ENCODE measurements at regions of chr1 and their contacts with region 1.

Region 1: GRCh38 chr1:218665221-218665620 is 320.1 kb downstream of the TGFB2 start:
- DNase-seq: peak; percentile 48
- ATAC-seq: peak; percentile 54
- H3K4me3 ChIP-seq: peak overlapping the region; percentile 28; the same call in 1 of the 2 replicates
- H3K27ac ChIP-seq: peak overlapping the region; percentile 51
- H3K4me1 ChIP-seq: peaks cover 32% of the 10 kb centered on the region
- H3K27me3 ChIP-seq: no peaks in the 10 kb centered on the region
- CTCF ChIP-seq: no peak

Region 2: DNA sequence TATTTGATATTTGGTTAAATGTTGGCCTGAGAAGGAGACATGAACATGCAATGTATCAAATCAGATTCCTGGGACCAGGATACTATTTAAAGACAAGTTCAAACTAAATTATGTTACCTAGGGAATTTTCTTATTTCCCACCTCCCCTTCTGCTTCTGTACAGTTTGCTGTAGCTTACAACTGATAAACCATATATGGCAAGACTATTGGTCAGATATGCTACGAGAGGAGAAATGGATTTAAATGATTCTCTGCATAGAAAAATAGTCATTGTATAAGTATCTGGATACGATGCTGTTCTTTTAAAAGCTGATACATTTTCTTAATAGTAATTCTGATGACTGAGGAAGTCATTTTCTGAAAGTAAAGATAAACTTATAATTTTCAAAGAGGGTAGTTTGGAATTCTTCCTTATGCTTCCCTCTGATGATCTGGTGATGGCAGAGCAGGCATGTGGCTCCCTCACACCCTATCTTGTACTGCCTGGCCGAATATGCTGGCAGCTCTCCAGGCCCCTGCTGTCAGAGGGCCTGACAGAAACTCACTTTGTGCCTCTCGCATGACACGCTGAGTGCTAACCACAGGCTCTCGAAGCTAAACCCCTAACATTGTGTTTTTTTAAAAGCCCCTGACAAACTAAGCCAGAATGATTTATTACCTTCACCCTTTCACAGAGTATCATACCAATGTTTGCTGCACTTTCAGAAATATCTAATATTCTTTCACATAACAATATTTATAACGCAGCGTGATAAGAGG is 360.8 kb before region 1 on chr1:
- CTCF ChIA-PET with region 1: no interaction called
- POLR2A ChIA-PET with region 1: no interaction called
- intact Hi-C with region 1: no loop called
- DNase-seq: no peak
- ATAC-seq: no peak
- H3K4me3 ChIP-seq: no peak overlapping the region
- H3K27ac ChIP-seq: no peak overlapping the region
- H3K4me1 ChIP-seq: 0 out of 2 replicates have a peak, but pooled peaks cover 4% of the 10 kb centered on the region
- H3K27me3 ChIP-seq: no peaks in the 10 kb centered on the region
- CTCF ChIP-seq: no peak

Region 3: DNA sequence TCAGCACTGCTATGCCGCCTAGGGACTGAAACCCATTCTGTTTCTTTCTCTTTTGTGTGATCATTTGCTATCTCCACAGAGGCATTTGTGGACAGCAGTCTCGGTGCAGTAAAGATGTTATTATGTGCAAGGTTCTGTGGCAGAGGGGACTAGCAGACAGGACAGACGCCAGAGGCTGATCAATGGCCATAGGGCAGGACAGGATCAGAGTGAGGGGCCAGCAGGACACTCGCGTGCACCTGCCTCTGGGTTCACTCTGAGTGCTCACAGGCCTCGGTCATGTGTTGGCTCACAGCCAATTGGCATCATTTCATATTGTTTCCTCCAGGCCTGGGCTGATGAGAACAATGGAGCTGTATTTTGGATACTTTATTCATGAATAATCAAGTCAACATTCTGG is 107.5 kb before region 1 on chr1:
- CTCF ChIA-PET with region 1: no interaction called
- POLR2A ChIA-PET with region 1: no interaction called
- intact Hi-C with region 1: loop called (anchors 2 kb)
- DNase-seq: peak; percentile 93
- ATAC-seq: peak; percentile 83
- H3K4me3 ChIP-seq: no peak overlapping the region
- H3K27ac ChIP-seq: no peak overlapping the region
- H3K4me1 ChIP-seq: peaks cover 11% of the 10 kb centered on the region
- H3K27me3 ChIP-seq: no peaks in the 10 kb centered on the region
- CTCF ChIP-seq: no peak

Region 4: DNA sequence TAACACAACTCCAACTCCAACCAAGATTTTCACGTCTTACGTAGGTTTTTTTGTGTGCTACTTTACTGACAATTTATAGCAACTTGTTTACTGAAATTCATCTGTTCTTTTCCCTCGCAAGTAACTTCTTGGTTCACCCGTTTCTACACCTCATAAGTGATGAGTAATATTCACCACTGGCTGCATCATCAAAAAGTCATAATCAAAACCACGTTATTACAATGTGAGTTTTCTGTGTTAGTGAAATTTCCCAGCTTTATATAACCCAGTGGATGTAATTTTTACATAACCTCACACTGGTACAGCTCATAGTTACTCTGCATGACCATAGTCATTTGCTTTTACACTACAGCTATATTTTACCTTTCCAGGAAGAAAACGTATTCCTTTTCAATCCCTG is 107.4 kb after region 1 on chr1:
- CTCF ChIA-PET with region 1: no interaction called
- POLR2A ChIA-PET with region 1: no interaction called
- intact Hi-C with region 1: no loop called
- DNase-seq: peak; percentile 68
- ATAC-seq: peak; percentile 53
- H3K4me3 ChIP-seq: no peak overlapping the region
- H3K27ac ChIP-seq: no peak overlapping the region
- H3K4me1 ChIP-seq: peaks cover 12% of the 10 kb centered on the region
- H3K27me3 ChIP-seq: no peaks in the 10 kb centered on the region
- CTCF ChIP-seq: no peak